SK-N-SH (cell line): ENCODE measurements at regions of chr7 and their contacts with region 1.

Region 1: DNA sequence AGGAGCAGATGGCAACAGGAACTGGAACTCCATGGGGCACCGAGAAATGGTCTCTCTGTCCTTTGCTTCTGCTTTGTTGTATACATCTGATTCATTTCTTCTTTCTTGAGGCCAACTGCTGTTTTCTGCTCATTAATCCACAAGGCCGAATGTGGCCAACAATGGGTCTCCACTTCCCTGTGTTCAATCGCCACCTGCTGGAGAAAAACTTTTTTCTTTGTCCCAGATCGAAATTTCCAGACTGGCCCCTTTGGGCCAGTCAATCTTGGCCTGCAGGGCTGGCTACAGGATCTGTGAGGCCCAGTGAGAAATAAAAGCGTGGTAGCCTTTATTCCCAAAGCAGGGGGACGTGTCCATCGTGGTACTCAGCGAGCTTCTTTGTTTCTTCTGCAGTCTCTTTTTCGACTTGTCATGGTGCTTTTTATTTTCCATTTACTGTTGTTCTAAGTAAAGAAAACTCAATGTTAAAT is 58.8 kb downstream of the PARP12 start:
- DNase-seq: peak; percentile 67
- H3K4me3 ChIP-seq: no peak overlapping the region
- H3K27ac ChIP-seq: no peak overlapping the region
- H3K4me1 ChIP-seq: peaks cover 0 to 5% of the 10 kb centered on the region in 2 experiments; a peak in 1 of 4 replicates
- H3K27me3 ChIP-seq: no peaks in the 10 kb centered on the region
- CTCF ChIP-seq: peak; percentile 73
- EP300 ChIP-seq: no peak
- RAD21 ChIP-seq: peak; percentile 71

Region 2: DNA sequence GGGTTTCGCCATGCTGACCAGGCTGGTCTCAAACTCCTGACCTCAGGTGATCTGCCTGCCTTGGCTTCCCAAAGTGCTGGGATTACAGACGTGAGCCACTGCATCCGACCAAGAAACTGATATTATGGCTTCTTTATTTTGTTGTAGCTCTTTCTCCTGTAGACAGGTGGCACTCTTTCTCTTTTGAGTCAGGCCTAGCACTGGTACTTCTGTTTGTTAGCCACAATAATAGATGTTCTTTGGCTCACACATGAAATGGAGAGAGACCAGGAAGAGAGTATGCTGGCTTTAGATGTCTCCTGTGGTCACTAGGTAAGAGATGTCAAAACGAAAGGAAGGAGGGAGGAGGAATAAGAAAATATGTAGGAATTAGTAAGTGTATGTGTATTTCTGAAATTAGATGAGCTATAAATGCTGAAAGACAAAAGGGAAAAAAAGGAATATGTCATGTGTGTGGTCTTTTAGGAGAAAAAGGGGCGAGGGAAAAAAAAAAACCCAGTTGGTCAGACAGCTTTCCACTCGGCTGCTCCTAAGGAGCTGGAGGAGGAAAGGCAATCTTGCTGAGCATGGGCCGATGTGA is 401.7 kb before region 1 on chr7:
- CTCF ChIA-PET with region 1: interaction called, 39 read pairs
- POLR2A ChIA-PET with region 1: no interaction called
- DNase-seq: peak; percentile 65
- H3K4me3 ChIP-seq: no peak overlapping the region
- H3K27ac ChIP-seq: no peak overlapping the region
- H3K4me1 ChIP-seq: peaks cover 0 to 18% of the 10 kb centered on the region in 2 experiments; a peak in 1 of 4 replicates
- H3K27me3 ChIP-seq: no peaks in the 10 kb centered on the region
- CTCF ChIP-seq: peak; percentile 86
- EP300 ChIP-seq: no peak
- RAD21 ChIP-seq: peak; percentile 76

Region 3: DNA sequence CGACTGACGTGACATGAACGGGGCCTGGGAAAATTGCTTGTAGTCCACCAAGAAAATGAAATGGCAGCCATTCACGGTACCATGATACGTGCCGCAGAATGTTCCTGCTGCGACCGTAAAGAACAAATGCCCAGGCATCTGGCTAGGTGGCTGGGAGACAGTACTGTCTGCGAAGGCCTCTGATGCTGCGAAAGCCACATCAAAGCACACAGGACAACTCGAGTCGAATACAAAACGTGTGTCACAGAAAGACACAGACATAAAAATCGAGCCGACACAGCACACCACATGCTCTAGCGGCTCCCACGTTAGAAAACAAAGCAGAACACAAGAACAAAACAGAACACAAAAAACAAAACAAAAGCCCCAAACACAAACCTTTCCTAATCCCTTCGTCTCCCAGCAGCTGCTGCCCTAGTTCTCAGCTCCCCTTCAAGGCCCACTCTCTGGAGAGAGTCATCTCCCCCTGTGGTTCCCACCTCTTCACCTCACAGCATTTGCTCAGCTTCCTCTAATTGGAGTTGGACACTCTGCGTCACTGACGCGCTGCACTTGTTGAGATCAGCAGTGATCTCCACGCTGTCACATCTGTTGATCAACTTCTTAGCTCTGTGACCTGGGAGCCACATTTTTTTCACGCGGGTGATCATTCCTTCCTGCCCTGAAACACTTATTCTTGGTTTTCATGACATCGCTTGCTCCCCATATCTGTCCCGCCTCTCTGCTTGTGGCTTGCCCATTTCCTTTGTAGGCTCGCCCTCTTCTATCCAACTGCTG is 368.2 kb before region 1 on chr7:
- CTCF ChIA-PET with region 1: interaction called, 14 read pairs
- POLR2A ChIA-PET with region 1: no interaction called
- DNase-seq: no peak
- H3K4me3 ChIP-seq: no peak overlapping the region
- H3K27ac ChIP-seq: no peak overlapping the region
- H3K4me1 ChIP-seq: no peaks in the 10 kb centered on the region
- H3K27me3 ChIP-seq: no peaks in the 10 kb centered on the region
- CTCF ChIP-seq: no peak
- EP300 ChIP-seq: no peak
- RAD21 ChIP-seq: no peak

Region 4: GRCh38 chr7:139731802-139732470 is 272.0 kb before region 1 on chr7:
- CTCF ChIA-PET with region 1: no interaction called
- POLR2A ChIA-PET with region 1: no interaction called
- DNase-seq: no peak
- H3K4me3 ChIP-seq: peak overlapping the region in 1 of 2 experiments; percentile 13; a peak in 2 of 4 replicates
- H3K27ac ChIP-seq: peak overlapping the region; percentile 45 to 76
- H3K4me1 ChIP-seq: peaks cover 19 to 43% of the 10 kb centered on the region in 2 experiments
- H3K27me3 ChIP-seq: no peaks in the 10 kb centered on the region
- CTCF ChIP-seq: no peak
- EP300 ChIP-seq: peak in 1 of 2 experiments; percentile 77; a peak in 2 of 4 replicates
- RAD21 ChIP-seq: no peak

Region 5: GRCh38 chr7:139777948-139778841 is 225.8 kb before region 1 on chr7 and contains the start of gene HIPK2:
- CTCF ChIA-PET with region 1: interaction called, 53 read pairs
- POLR2A ChIA-PET with region 1: no interaction called
- DNase-seq: peak; percentile 99
- H3K4me3 ChIP-seq: peak within 1 kb of the TSS; percentile 84 to 98
- H3K27ac ChIP-seq: peak within 1 kb of the TSS; percentile 87 to 97
- H3K4me1 ChIP-seq: peaks cover 22 to 23% of the 10 kb centered on the region in 2 experiments
- H3K27me3 ChIP-seq: no peaks in the 10 kb centered on the region
- CTCF ChIP-seq: no peak
- EP300 ChIP-seq: peak in 1 of 2 experiments; percentile 30; a peak in 1 of 4 replicates
- RAD21 ChIP-seq: no peak
- polyA plus RNA-seq, gene HIPK2: 9.2 and 14.2 TPM in 2 replicates

Region 6: GRCh38 chr7:140017543-140017942 is 13.6 kb after region 1 on chr7:
- CTCF ChIA-PET with region 1: interaction called, 24 read pairs
- POLR2A ChIA-PET with region 1: no interaction called
- DNase-seq: no peak
- H3K4me3 ChIP-seq: no peak overlapping the region
- H3K27ac ChIP-seq: no peak overlapping the region
- H3K4me1 ChIP-seq: peaks cover 0 to 10% of the 10 kb centered on the region in 2 experiments; a peak in 1 of 4 replicates
- H3K27me3 ChIP-seq: no peaks in the 10 kb centered on the region; the same call in 1 of the 2 replicates
- CTCF ChIP-seq: no peak
- EP300 ChIP-seq: no peak
- RAD21 ChIP-seq: no peak

Region 7: DNA sequence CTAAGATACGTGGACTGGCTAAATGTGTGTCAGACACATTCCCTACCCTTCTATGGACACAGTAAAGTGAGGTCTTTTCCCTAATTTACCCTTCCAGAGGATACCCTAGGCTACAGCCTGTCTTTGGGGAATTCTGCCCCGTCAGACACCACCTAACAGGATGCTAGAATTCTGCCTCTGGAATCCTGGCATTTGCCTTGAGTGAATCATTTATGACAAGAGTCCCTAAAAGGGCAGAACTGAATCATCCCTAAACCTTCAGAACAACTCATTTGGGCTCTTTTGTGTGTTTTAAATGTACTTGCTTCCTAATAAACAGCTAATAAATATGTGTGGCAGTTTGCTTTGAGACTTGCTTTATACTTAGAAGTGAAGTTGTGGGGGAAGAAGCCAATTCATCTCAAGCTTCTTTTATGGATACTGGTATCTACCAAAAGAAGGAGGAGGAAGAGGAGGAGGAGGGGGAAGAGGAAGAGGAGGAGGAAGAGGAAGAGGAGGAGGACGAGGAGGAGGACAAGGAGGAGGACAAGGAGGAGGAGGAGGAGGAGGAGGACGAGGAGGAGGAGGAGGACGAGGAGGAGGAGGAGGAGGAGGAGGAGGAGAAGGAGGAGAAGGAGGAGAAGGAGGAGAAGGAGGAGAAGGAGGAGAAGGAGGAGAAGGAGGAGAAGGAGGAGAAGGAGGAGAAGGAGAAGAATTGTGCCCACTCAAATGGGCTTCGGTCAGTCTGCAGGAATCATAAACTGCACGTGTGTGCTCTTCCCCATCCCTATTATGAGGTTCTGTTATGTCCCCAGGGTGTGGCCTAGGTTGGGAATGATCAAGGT is 31.7 kb after region 1 on chr7:
- CTCF ChIA-PET with region 1: interaction called, 16 read pairs
- POLR2A ChIA-PET with region 1: no interaction called
- DNase-seq: no peak
- H3K4me3 ChIP-seq: 0 out of 4 replicates have a peak overlapping the region, but pooled peaks of 1 of the 2 experiments have one; percentile 15
- H3K27ac ChIP-seq: peak overlapping the region; percentile 29 to 58; a peak in 3 of 4 replicates
- H3K4me1 ChIP-seq: peaks cover 32 to 37% of the 10 kb centered on the region in 2 experiments
- H3K27me3 ChIP-seq: no peaks in the 10 kb centered on the region
- CTCF ChIP-seq: no peak
- EP300 ChIP-seq: peak in 1 of 2 experiments; percentile 54; a peak in 1 of 4 replicates
- RAD21 ChIP-seq: no peak

Region 8: DNA sequence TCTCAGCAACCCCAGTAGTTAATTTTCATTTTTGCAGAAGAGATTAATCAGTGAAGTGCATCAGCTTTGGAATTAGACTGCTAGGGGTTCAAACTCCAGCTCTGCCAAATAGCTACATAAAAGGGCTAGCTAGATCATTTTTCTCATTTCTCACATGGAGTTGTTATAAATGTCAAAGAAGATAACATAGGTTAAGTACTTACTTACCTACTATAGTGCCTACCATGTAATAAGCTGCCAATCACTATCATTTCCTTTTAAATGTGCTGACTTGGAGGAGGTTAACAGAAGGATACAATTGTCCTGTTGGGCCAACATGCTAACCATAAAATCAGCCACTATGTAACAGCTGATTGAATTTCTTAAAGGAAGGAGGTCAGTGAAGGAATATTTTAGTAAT is 132.1 kb after region 1 on chr7:
- CTCF ChIA-PET with region 1: no interaction called
- POLR2A ChIA-PET with region 1: no interaction called
- DNase-seq: no peak
- H3K4me3 ChIP-seq: no peak overlapping the region
- H3K27ac ChIP-seq: no peak overlapping the region
- H3K4me1 ChIP-seq: peaks cover 0 to 7% of the 10 kb centered on the region in 2 experiments; a peak in 1 of 4 replicates
- H3K27me3 ChIP-seq: no peaks in the 10 kb centered on the region
- CTCF ChIP-seq: no peak
- EP300 ChIP-seq: no peak
- RAD21 ChIP-seq: no peak

Region 9: DNA sequence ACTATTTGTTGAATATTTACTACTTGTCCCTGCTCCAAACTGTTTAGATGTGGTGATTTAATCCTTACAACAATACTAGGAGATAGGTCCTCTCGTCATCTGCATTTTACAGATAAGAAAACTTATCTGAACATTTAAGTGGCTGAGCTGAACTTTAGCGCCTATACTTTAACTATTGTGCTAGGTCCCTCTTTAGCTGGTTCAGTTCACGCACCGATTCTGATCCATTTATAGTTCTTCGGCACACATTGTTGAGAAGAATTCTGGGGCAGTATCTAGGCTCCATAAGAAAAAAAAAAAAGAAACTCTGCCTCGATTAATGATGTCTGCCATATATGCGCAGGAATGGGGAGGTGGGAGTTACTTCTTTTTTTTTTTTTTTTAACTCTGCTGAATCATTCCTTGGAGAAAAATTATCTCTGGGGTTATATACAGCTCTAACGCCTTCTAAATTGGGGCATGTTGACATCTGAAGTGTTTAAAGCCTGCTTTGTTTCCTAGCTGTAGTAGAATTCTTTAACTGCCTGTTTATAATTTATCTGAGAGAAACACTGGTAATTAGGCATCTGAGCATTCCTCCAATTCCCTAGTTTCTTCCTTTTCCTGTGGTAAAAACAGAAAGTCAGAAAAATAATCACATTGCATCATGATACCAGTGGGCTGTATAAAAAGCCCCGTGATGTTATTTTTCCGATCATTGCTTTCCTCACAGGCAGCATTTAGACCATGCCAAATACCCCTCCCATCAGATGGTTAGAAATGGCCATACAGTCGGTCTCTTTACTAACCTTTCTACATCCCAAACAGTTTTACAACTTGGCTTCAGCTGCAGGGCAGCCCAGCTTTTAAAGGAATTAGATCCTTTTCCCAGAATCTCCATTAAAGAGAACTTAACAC is 271.4 kb after region 1 on chr7:
- CTCF ChIA-PET with region 1: no interaction called
- POLR2A ChIA-PET with region 1: no interaction called
- DNase-seq: no peak
- H3K4me3 ChIP-seq: no peak overlapping the region
- H3K27ac ChIP-seq: no peak overlapping the region
- H3K4me1 ChIP-seq: no peaks in the 10 kb centered on the region; a peak in 1 of 4 replicates
- H3K27me3 ChIP-seq: peaks cover 21% of the 10 kb centered on the region; the same call in 1 of the 2 replicates
- CTCF ChIP-seq: no peak
- EP300 ChIP-seq: no peak
- RAD21 ChIP-seq: no peak